GM12878 (cell line): ENCODE measurements at regions of chr4 and their contacts with region 1.

Region 1: DNA sequence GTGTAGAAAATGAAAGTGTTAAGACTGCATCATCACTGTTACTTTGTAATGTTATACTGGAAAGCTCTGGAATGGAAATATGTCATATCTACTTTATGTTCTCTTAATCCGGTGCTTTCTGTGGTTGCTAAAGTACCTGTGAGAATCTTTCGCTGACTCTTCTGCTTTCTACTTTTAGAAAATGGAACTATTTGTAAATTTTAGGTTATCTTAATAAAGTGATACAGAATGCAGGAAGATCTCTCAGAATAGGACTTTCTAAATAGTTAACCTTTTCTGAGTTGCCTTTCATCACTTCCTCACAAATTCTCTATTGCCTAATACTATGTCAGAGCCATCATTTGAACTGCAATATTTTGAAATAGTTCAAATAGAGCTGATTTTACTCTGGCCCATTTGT is 69.3 kb downstream of the BMP2K start:
- DNase-seq: peak; percentile 5
- ATAC-seq: peak; percentile 92
- H3K4me3 ChIP-seq: no peak overlapping the region; the same call in 1 of the 2 replicates
- H3K27ac ChIP-seq: no peak overlapping the region
- H3K4me1 ChIP-seq: no peaks in the 10 kb centered on the region; the same call in 1 of the 2 replicates
- H3K27me3 ChIP-seq: no peaks in the 10 kb centered on the region
- CTCF ChIP-seq: no peak
- EP300 ChIP-seq: no peak
- POLR2A ChIP-seq: no peak
- RAD21 ChIP-seq: no peak

Region 2: GRCh38 chr4:78766650-78767049 is 78.8 kb before region 1 on chr4:
- CTCF ChIA-PET with region 1: no interaction called
- POLR2A ChIA-PET with region 1: interaction called, 3 read pairs
- RAD21 ChIA-PET with region 1: interaction called, 4 read pairs
- SMC1A ChIA-PET with region 1: interaction called, 10 read pairs
- in situ Hi-C with region 1: no loop called
- intact Hi-C with region 1: no loop called
- DNase-seq: no peak
- ATAC-seq: peak; percentile 92
- H3K4me3 ChIP-seq: peak overlapping the region; percentile 14; the same call in 1 of the 2 replicates
- H3K27ac ChIP-seq: no peak overlapping the region
- H3K4me1 ChIP-seq: peaks cover 27% of the 10 kb centered on the region
- H3K27me3 ChIP-seq: no peaks in the 10 kb centered on the region
- CTCF ChIP-seq: no peak
- EP300 ChIP-seq: no peak
- POLR2A ChIP-seq: no peak
- RAD21 ChIP-seq: no peak